ENCODE measurements at regions of chr17 and their contacts with region 1.

Region 1: GRCh38 chr17:76278952-76279741 is 14.0 kb downstream of the UBALD2 start:
- DNase-seq: peak; percentile 92 to 95 (median 94)
- ATAC-seq: peak; percentile 93
- H3K4me3 ChIP-seq: no peak overlapping the region
- H3K27ac ChIP-seq: peak overlapping the region in 3 of 4 donors; percentile 34 to 46 (median 35)
- H3K4me1 ChIP-seq: peaks cover 14% of the 10 kb centered on the region
- H3K27me3 ChIP-seq: no peaks in the 10 kb centered on the region
- CTCF ChIP-seq: peak; percentile 94 to 98 (median 97)
- POLR2A ChIP-seq: peak in 1 of 3 donors; percentile 28

Region 2: GRCh38 chr17:76014184-76014924 is 264.8 kb before region 1 on chr17:
- intact Hi-C with region 1: loop called (anchors 10 kb)
- DNase-seq: peak; percentile 78 to 87 (median 84)
- ATAC-seq: peak; percentile 86
- H3K4me3 ChIP-seq: no peak overlapping the region
- H3K27ac ChIP-seq: no peak overlapping the region
- H3K4me1 ChIP-seq: peaks cover 8% of the 10 kb centered on the region
- H3K27me3 ChIP-seq: no peaks in the 10 kb centered on the region
- CTCF ChIP-seq: peak; percentile 86 to 98 (median 92)
- POLR2A ChIP-seq: no peak

Region 3: GRCh38 chr17:76121932-76122430 is 157.2 kb before region 1 on chr17:
- intact Hi-C with region 1: loop called (anchors 5 kb)
- DNase-seq: peak in 1 of 4 donors; percentile 48
- ATAC-seq: peak; percentile 43
- H3K4me3 ChIP-seq: no peak overlapping the region
- H3K27ac ChIP-seq: no peak overlapping the region
- H3K4me1 ChIP-seq: peaks cover 12% of the 10 kb centered on the region
- H3K27me3 ChIP-seq: peaks cover 0 to 4% of the 10 kb centered on the region in 2 donors
- CTCF ChIP-seq: no peak
- POLR2A ChIP-seq: no peak

Region 4: GRCh38 chr17:76446449-76447231 is 167.5 kb after region 1 on chr17:
- intact Hi-C with region 1: no loop called
- DNase-seq: peak in 2 of 4 donors; percentile 37 to 44
- ATAC-seq: peak; percentile 63
- H3K4me3 ChIP-seq: no peak overlapping the region
- H3K27ac ChIP-seq: no peak overlapping the region
- H3K4me1 ChIP-seq: peaks cover 26% of the 10 kb centered on the region
- H3K27me3 ChIP-seq: no peaks in the 10 kb centered on the region
- CTCF ChIP-seq: no peak
- POLR2A ChIP-seq: no peak